Activated CD8-positive, alpha-beta T cell treated with anti-CD3 and anti-CD28 coated beads, Interleukin-2, amount 10 ng/mL, durations not matched to agents 7 days and 5 days (primary cell): ENCODE measurements at regions of chr16 and their contacts with region 1.

Region 1: DNA sequence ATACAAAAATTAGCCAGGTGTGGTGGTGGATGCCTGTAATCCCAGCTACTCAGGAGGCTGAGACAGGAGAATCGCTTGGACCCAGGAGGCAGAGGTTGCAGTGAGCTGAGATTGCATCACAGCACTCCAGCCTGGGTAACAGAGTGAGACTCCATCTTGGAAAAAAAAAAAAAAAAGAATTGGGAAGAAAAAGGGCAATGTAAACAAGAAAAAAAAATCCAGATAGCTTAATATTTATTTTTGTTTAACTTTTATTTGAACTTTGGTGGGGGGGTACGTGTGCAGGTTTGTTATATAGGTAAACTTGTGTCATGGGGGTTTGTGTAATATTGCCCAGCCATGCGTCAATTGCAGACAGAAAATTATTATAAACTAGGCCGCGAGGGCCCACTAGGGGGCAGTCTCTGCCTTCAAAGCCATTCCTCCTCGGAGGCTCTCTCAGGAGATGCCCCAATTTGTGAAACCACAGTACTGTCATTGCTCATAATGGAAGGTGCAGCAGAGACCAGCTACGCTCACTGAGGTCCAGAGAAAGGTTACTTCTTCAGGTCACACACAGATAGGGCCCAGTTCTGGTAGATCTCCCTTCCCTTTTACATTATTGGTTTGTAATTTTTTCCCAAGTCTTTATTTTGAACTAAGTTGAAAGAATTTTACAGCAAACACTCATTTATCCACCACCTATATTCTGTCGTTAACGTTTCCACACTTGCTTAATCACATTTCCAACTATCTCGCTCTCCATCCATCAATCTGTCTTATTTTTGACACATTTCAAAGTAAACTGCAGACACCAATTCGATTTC is 206.2 kb downstream of the PRKCB start:
- DNase-seq: peak; percentile 86
- ATAC-seq: peak; percentile 87
- H3K4me3 Mint-ChIP-seq: no peak overlapping the region
- H3K27ac Mint-ChIP-seq: no peak overlapping the region
- H3K4me1 Mint-ChIP-seq: peaks cover 11% of the 10 kb centered on the region
- H3K27me3 Mint-ChIP-seq: no peaks in the 10 kb centered on the region

Region 2: GRCh38 chr16:24054741-24055491 is 12.9 kb after region 1 on chr16:
- CTCF ChIA-PET with region 1: interaction called, 10 read pairs
- POLR2A ChIA-PET with region 1: no interaction called
- DNase-seq: no peak
- ATAC-seq: no peak
- H3K4me3 Mint-ChIP-seq: no peak overlapping the region
- H3K27ac Mint-ChIP-seq: no peak overlapping the region
- H3K4me1 Mint-ChIP-seq: no peaks in the 10 kb centered on the region
- H3K27me3 Mint-ChIP-seq: no peaks in the 10 kb centered on the region